ENCODE measurements at regions of chr12 and their contacts with region 1.

Region 1: GRCh38 chr12:120356567-120357030 is 12.4 kb downstream of the MSI1 start:
- DNase-seq: peak; percentile 76
- H3K4me3 ChIP-seq: no peak overlapping the region
- H3K27ac ChIP-seq: no peak overlapping the region
- H3K4me1 ChIP-seq: peaks cover 9% of the 10 kb centered on the region
- H3K27me3 ChIP-seq: peaks cover 6% of the 10 kb centered on the region
- CTCF ChIP-seq: peak; percentile 87

Region 2: DNA sequence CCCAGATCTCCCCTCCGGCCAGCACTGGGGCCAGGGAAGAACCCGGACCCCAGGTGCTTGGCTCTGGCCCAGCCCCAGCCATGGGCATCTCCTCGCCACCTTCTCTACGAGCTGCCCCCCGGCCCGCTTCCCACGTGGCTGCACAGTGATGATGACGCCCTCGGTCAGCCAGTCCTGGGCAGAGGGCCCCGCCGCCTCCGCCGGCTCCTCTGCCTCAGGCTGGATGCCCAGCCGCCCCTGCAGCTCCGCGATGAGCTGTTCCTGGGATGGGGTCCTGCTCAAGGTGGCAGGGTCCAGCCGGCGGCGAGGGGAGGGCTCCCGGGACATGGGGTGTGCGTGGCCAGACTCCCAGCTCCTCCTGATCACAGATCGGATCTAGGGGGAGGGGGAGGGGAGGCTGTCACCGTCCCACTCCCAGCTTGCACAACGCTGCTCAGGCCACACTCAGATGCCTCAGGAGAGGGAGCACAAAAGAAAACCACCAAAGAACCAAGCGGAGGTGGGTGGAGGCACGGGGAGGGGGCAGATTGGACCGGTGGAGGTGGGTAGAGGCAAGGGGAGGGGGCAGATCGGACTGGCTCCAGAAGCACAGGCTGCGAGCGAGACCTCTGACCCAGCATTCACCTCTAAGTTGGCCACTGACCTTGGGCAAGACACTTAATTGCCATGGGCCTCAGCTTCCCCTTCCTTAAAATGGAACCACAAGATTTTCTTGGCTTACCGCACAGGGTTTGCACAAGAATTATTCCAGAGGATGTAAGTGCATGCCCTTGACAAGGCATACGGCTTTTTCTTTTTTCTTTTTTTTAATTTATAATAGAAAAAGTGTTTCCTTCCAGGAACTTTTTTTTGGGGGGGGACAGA is 139.6 kb before region 1 on chr12:
- intact Hi-C with region 1: no loop called
- DNase-seq: no peak
- H3K4me3 ChIP-seq: no peak overlapping the region
- H3K27ac ChIP-seq: no peak overlapping the region
- H3K4me1 ChIP-seq: no peaks in the 10 kb centered on the region
- H3K27me3 ChIP-seq: no peaks in the 10 kb centered on the region
- CTCF ChIP-seq: no peak

Region 3: GRCh38 chr12:120437754-120438494 is 81.3 kb after region 1 on chr12 and contains the start of gene COX6A1:
- intact Hi-C with region 1: loop called (anchors 10 kb)
- DNase-seq: peak; percentile 95
- H3K4me3 ChIP-seq: peak within 1 kb of the TSS; percentile 94
- H3K27ac ChIP-seq: peak within 1 kb of the TSS; percentile 95
- H3K4me1 ChIP-seq: peaks cover 36% of the 10 kb centered on the region
- H3K27me3 ChIP-seq: peaks cover 6% of the 10 kb centered on the region
- CTCF ChIP-seq: no peak
- total RNA-seq, gene COX6A1: 142 TPM

Region 4: GRCh38 chr12:120562906-120563305 is 206.3 kb after region 1 on chr12:
- intact Hi-C with region 1: loop called (anchors 5 kb)
- DNase-seq: no peak
- H3K4me3 ChIP-seq: peak overlapping the region; percentile 7
- H3K27ac ChIP-seq: peak overlapping the region; percentile 82
- H3K4me1 ChIP-seq: peaks cover 29% of the 10 kb centered on the region
- H3K27me3 ChIP-seq: no peaks in the 10 kb centered on the region
- CTCF ChIP-seq: no peak